ENCODE measurements at regions of chr20 and their contacts with region 1.

Region 1: DNA sequence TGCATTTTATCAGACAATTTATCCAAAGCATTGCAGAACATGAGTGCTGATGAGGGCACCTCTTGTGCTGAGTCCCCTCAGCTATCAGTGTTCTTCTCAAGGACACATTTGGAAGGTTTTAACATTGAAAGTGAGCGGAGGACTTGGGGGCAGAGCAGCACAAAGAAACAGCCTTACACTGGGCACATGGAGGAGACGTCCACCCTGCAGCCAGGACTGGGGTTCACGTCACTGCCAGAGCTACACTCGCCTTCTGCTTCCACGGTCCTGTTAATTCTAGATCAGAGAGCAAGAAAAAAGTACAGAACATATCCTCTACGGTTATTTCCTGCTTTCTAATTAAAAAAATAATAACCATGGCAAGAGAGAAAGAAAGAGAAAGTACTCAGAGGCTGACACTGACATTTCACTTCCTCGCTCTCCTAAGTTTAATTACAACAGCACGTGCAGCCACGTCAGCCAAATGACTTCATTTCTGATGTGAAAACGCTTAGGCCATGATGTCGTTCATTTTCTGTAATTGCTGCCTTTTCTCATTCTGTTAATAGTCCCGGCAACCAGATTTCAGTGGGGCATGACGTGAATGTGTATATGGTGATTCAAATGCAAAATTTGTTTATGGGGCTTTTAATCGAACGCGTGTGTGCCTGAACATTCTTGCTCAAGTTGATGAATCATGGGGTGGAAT is 5.1 kb downstream of the PRND start:
- DNase-seq: peak; percentile 77
- ATAC-seq: peak; percentile 64
- H3K4me3 Mint-ChIP-seq: peak overlapping the region; percentile 40
- H3K27ac Mint-ChIP-seq: peak overlapping the region; percentile 18
- H3K4me1 Mint-ChIP-seq: peaks cover 11% of the 10 kb centered on the region
- H3K27me3 Mint-ChIP-seq: no peaks in the 10 kb centered on the region
- CTCF ChIP-seq: no peak

Region 2: GRCh38 chr20:4607287-4607713 is 119.6 kb before region 1 on chr20:
- CTCF ChIA-PET with region 1: interaction called, 27 read pairs
- POLR2A ChIA-PET with region 1: interaction called, 4 read pairs
- intact Hi-C with region 1: no loop called
- DNase-seq: peak; percentile 66
- ATAC-seq: peak; percentile 79
- H3K4me3 Mint-ChIP-seq: no peak overlapping the region
- H3K27ac Mint-ChIP-seq: no peak overlapping the region
- H3K4me1 Mint-ChIP-seq: no peaks in the 10 kb centered on the region
- H3K27me3 Mint-ChIP-seq: peaks cover 5% of the 10 kb centered on the region
- CTCF ChIP-seq: peak; percentile 99

Region 3: GRCh38 chr20:4613718-4614620 is 112.9 kb before region 1 on chr20:
- CTCF ChIA-PET with region 1: interaction called, 25 read pairs
- POLR2A ChIA-PET with region 1: no interaction called
- intact Hi-C with region 1: no loop called
- DNase-seq: peak; percentile 89
- ATAC-seq: peak; percentile 90
- H3K4me3 Mint-ChIP-seq: no peak overlapping the region
- H3K27ac Mint-ChIP-seq: no peak overlapping the region
- H3K4me1 Mint-ChIP-seq: peaks cover 2% of the 10 kb centered on the region
- H3K27me3 Mint-ChIP-seq: no peaks in the 10 kb centered on the region
- CTCF ChIP-seq: peak; percentile 60

Region 4: GRCh38 chr20:4689220-4689619 is 37.6 kb before region 1 on chr20:
- CTCF ChIA-PET with region 1: no interaction called
- POLR2A ChIA-PET with region 1: no interaction called
- intact Hi-C with region 1: no loop called
- DNase-seq: no peak
- ATAC-seq: no peak
- H3K4me3 Mint-ChIP-seq: peak overlapping the region; percentile 13
- H3K27ac Mint-ChIP-seq: peak overlapping the region; percentile 67
- H3K4me1 Mint-ChIP-seq: peaks cover 70% of the 10 kb centered on the region
- H3K27me3 Mint-ChIP-seq: no peaks in the 10 kb centered on the region
- CTCF ChIP-seq: no peak

Region 5: GRCh38 chr20:4740774-4741431 is 14.0 kb after region 1 on chr20:
- CTCF ChIA-PET with region 1: interaction called, 20 read pairs
- POLR2A ChIA-PET with region 1: interaction called, 3 read pairs
- intact Hi-C with region 1: no loop called
- DNase-seq: peak; percentile 84
- ATAC-seq: peak; percentile 68
- H3K4me3 Mint-ChIP-seq: no peak overlapping the region
- H3K27ac Mint-ChIP-seq: no peak overlapping the region
- H3K4me1 Mint-ChIP-seq: peaks cover 8% of the 10 kb centered on the region
- H3K27me3 Mint-ChIP-seq: peaks cover 10% of the 10 kb centered on the region
- CTCF ChIP-seq: peak; percentile 82

Measured in activated CD8-positive, alpha-beta T cell treated with anti-CD3 and anti-CD28 coated beads for 36 hours (primary cell).